Endothelial cell of umbilical vein (primary cell): ENCODE measurements at regions of chr16 and their contacts with region 1.

Region 1: GRCh38 chr16:77499373-77500285 is 64.8 kb upstream of the ADAMTS18 start:
- DNase-seq: peak; percentile 91
- H3K4me3 ChIP-seq: no peak overlapping the region
- H3K27ac ChIP-seq: peak overlapping the region; percentile 21
- H3K4me1 ChIP-seq: peaks cover 23% of the 10 kb centered on the region
- H3K27me3 ChIP-seq: no peaks in the 10 kb centered on the region
- CTCF ChIP-seq: no peak
- POLR2A ChIP-seq: no peak

Region 2: GRCh38 chr16:77457046-77457445 is 42.6 kb before region 1 on chr16:
- CTCF ChIA-PET with region 1: no interaction called
- POLR2A ChIA-PET with region 1: no interaction called
- dilution Hi-C with region 1: no loop called
- intact Hi-C with region 1: loop called (anchors 1 kb)
- DNase-seq: peak; percentile 93
- H3K4me3 ChIP-seq: peak overlapping the region in 1 of 3 experiments; percentile 60
- H3K27ac ChIP-seq: peak overlapping the region; percentile 95
- H3K4me1 ChIP-seq: peaks cover 19% of the 10 kb centered on the region
- H3K27me3 ChIP-seq: no peaks in the 10 kb centered on the region
- CTCF ChIP-seq: no peak
- POLR2A ChIP-seq: no peak

Region 3: DNA sequence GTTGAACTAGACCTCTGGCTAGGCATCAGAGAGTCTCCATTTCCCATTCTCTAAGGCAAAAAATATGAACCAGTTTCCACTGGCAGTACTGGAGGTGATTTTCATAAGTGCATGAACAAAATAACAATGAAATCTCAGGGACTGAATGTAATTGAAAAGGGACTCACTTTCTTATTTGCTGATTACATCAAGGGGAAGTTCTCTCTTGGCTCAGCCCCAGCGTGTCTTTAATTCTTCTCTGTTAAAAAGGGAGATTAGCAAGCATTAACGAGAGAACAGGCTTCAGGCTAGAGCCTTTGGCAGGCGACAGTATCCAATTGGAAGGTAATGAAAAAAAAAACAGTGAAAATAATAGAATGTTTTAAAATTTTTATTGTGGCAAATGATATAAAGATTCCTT is 30.8 kb before region 1 on chr16:
- CTCF ChIA-PET with region 1: no interaction called
- POLR2A ChIA-PET with region 1: no interaction called
- dilution Hi-C with region 1: no loop called
- intact Hi-C with region 1: loop called (anchors 2 kb)
- DNase-seq: peak; percentile 64
- H3K4me3 ChIP-seq: no peak overlapping the region
- H3K27ac ChIP-seq: no peak overlapping the region
- H3K4me1 ChIP-seq: peaks cover 2% of the 10 kb centered on the region
- H3K27me3 ChIP-seq: no peaks in the 10 kb centered on the region
- CTCF ChIP-seq: no peak
- POLR2A ChIP-seq: no peak

Region 4: GRCh38 chr16:77551357-77551756 is 51.7 kb after region 1 on chr16:
- CTCF ChIA-PET with region 1: no interaction called
- POLR2A ChIA-PET with region 1: no interaction called
- dilution Hi-C with region 1: no loop called
- intact Hi-C with region 1: loop called (anchors 5 kb)
- DNase-seq: no peak
- H3K4me3 ChIP-seq: no peak overlapping the region
- H3K27ac ChIP-seq: no peak overlapping the region
- H3K4me1 ChIP-seq: peaks cover 3% of the 10 kb centered on the region
- H3K27me3 ChIP-seq: no peaks in the 10 kb centered on the region
- CTCF ChIP-seq: no peak
- POLR2A ChIP-seq: no peak

Region 5: GRCh38 chr16:77574867-77575624 is 75.4 kb after region 1 on chr16:
- CTCF ChIA-PET with region 1: interaction called, 4 read pairs
- POLR2A ChIA-PET with region 1: no interaction called
- dilution Hi-C with region 1: no loop called
- intact Hi-C with region 1: loop called (anchors 2 kb)
- DNase-seq: peak; percentile 98
- H3K4me3 ChIP-seq: no peak overlapping the region
- H3K27ac ChIP-seq: peak overlapping the region; percentile 95
- H3K4me1 ChIP-seq: peaks cover 49% of the 10 kb centered on the region
- H3K27me3 ChIP-seq: no peaks in the 10 kb centered on the region
- CTCF ChIP-seq: no peak
- POLR2A ChIP-seq: peak; percentile 52